ENCODE measurements at regions of chr17 and their contacts with region 1.

Region 1: GRCh38 chr17:10127819-10128425 is 70.5 kb downstream of the GAS7 start:
- DNase-seq: peak; percentile 94
- H3K4me3 ChIP-seq: no peak overlapping the region
- H3K27ac ChIP-seq: peak overlapping the region; percentile 63 to 81 (median 74)
- H3K4me1 ChIP-seq: peaks cover 0 to 30% (median 14%) of the 10 kb centered on the region in 4 donors
- H3K27me3 ChIP-seq: no peaks in the 10 kb centered on the region
- CTCF ChIP-seq: no peak
- EP300 ChIP-seq: no peak
- POLR2A ChIP-seq: no peak

Region 2: GRCh38 chr17:10036511-10037061 is 91.3 kb before region 1 on chr17:
- intact Hi-C with region 1: loop called (anchors 5 kb)
- DNase-seq: peak; percentile 92
- H3K4me3 ChIP-seq: peak overlapping the region; percentile 17 to 39 (median 36)
- H3K27ac ChIP-seq: peak overlapping the region; percentile 68 to 81 (median 80)
- H3K4me1 ChIP-seq: peaks cover 0 to 21% (median 7%) of the 10 kb centered on the region in 4 donors
- H3K27me3 ChIP-seq: no peaks in the 10 kb centered on the region
- CTCF ChIP-seq: no peak
- EP300 ChIP-seq: peak in 1 of 4 donors; percentile 23
- POLR2A ChIP-seq: peak in 1 of 2 donors; percentile 47

Measured in sigmoid colon (tissue), 7 donors.